ENCODE measurements at regions of chr1 and their contacts with region 1.

Region 1: DNA sequence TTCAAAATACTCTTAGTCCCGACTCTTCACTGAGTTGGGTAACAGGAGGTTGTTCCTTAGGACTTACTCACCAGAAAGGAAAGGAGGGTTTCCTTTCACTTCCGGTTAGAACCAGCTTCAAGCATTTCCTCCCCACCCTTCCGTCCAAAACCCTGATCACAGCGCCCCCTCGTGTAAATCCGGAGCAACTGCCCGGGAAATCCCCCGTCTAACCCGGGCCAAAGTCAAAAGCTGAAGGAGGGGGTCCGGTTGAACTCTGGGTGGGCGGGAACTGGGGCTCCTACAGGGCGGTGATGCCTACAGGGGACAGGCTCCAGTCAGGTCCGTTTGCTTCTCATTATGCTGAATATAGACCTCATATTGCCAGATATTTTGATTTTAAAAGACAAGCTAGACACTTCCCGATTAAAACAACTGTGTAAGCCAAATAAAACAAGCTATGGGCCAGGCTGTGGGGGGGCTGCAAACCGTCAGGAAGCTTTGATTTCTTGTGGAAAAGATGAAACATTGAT is 15.0 kb upstream of the MTARC2 start:
- DNase-seq: peak; percentile 42 to 83 (median 69)
- ATAC-seq: peak; percentile 84
- H3K4me3 ChIP-seq: peak overlapping the region; percentile 11 to 17
- H3K4me3 Mint-ChIP-seq: peak overlapping the region; percentile 42
- H3K27ac ChIP-seq: peak overlapping the region in 1 of 2 experiments; percentile 1
- H3K27ac Mint-ChIP-seq: no peak overlapping the region
- H3K4me1 ChIP-seq: peaks cover 11% of the 10 kb centered on the region
- H3K4me1 Mint-ChIP-seq: peaks cover 16% of the 10 kb centered on the region
- H3K27me3 ChIP-seq: no peaks in the 10 kb centered on the region
- H3K27me3 Mint-ChIP-seq: no peaks in the 10 kb centered on the region
- CTCF ChIP-seq: peak; percentile 79

Region 2: GRCh38 chr1:220189750-220190347 is 543.3 kb before region 1 on chr1:
- CTCF ChIA-PET with region 1: no interaction called
- POLR2A ChIA-PET with region 1: no interaction called
- intact Hi-C with region 1: loop called (anchors 10 kb)
- DNase-seq: peak in 2 of 9 experiments; percentile 7 to 38
- ATAC-seq: no peak
- H3K4me3 ChIP-seq: no peak overlapping the region
- H3K4me3 Mint-ChIP-seq: no peak overlapping the region
- H3K27ac ChIP-seq: no peak overlapping the region
- H3K27ac Mint-ChIP-seq: no peak overlapping the region
- H3K4me1 ChIP-seq: no peaks in the 10 kb centered on the region
- H3K4me1 Mint-ChIP-seq: no peaks in the 10 kb centered on the region
- H3K27me3 ChIP-seq: no peaks in the 10 kb centered on the region
- H3K27me3 Mint-ChIP-seq: no peaks in the 10 kb centered on the region
- CTCF ChIP-seq: peak; percentile 46

Region 3: DNA sequence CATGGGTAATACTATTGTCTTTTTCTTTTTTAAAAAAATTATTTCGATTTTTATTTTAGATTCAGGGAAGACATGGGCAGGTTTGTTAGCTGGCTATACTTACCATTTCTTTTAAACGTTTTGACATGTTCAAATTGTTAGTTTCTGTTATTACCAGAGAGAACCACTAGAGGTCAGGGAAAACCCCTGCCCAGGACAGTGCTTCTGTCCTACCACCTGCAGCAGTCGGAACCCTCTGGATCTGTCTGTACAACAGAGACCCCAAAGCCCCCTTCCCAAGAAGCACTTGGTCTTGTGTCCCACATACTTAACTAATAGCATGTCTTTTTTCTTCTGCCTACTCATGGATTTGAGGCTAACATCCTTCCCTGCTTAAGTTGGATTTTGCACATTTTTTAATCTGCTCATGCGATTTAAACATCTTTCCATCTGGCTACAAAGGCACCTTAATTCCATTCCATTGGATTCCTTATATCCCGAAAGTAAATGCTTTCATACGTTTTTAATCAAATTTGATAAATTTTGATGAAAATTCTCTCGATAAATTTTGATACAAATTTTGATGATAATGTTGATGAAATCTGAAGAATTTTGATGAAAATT is 53.0 kb before region 1 on chr1:
- CTCF ChIA-PET with region 1: interaction called, 3 read pairs
- POLR2A ChIA-PET with region 1: no interaction called
- intact Hi-C with region 1: loop called in 1 of 2 experiments (anchors 1 kb)
- DNase-seq: peak in 2 of 9 experiments; percentile 35 to 47
- ATAC-seq: no peak
- H3K4me3 ChIP-seq: no peak overlapping the region
- H3K4me3 Mint-ChIP-seq: no peak overlapping the region
- H3K27ac ChIP-seq: no peak overlapping the region
- H3K27ac Mint-ChIP-seq: no peak overlapping the region
- H3K4me1 ChIP-seq: no peaks in the 10 kb centered on the region
- H3K4me1 Mint-ChIP-seq: no peaks in the 10 kb centered on the region
- H3K27me3 ChIP-seq: no peaks in the 10 kb centered on the region
- H3K27me3 Mint-ChIP-seq: no peaks in the 10 kb centered on the region
- CTCF ChIP-seq: peak; percentile 47

Region 4: DNA sequence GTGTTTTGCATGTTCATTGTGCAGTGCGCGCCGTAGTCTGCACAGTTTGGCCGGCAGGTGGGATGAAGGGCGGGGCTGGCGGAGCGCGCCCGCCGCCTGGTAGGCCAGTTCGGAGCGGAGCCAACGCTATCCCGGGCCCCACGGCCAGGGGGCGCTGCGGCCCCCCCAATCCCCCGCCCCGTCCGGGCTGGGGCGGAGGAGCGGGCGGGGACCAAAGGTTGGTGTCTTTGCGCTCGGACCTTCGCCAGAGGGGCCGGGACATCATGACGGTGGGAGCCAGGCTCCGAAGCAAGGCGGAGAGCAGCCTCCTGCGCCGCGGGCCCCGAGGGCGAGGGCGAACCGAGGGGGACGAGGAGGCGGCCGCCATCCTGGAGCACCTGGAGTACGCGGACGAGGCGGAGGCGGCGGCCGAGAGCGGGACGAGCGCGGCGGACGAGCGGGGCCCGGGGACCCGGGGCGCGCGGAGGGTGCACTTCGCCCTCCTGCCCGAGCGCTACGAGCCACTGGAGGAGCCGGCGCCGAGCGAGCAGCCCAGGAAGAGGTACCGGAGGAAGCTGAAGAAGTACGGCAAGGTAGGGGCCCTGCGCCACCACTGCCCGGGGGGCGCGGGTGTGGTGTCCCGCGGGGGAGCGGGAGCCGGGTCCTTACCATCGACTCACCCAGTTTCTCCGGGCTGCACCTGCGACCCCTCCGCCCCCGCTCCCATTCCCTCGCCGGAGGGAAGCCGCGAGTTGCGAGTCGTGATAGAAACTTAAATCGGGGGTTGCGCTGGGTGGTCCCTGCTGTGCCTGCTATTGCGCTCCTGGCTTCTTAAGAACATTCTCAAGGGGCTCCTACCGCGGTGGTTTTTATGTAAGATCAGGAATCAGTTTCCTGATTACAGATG is 42.8 kb before region 1 on chr1 and contains the start of gene C1orf115:
- CTCF ChIA-PET with region 1: interaction called, 5 read pairs
- POLR2A ChIA-PET with region 1: no interaction called
- intact Hi-C with region 1: loop called in 1 of 2 experiments (anchors 1 kb)
- DNase-seq: peak; percentile 30 to 73 (median 64)
- ATAC-seq: peak; percentile 95
- H3K4me3 ChIP-seq: peak within 1 kb of the TSS; percentile 31 to 54
- H3K4me3 Mint-ChIP-seq: peak within 1 kb of the TSS; percentile 74
- H3K27ac ChIP-seq: no peak within 1 kb of the TSS
- H3K27ac Mint-ChIP-seq: no peak within 1 kb of the TSS
- H3K4me1 ChIP-seq: no peaks in the 10 kb centered on the region
- H3K4me1 Mint-ChIP-seq: peaks cover 5% of the 10 kb centered on the region
- H3K27me3 ChIP-seq: peaks cover 0 to 8% of the 10 kb centered on the region in 2 experiments
- H3K27me3 Mint-ChIP-seq: peaks cover 33% of the 10 kb centered on the region
- CTCF ChIP-seq: peak; percentile 64
- total RNA-seq, gene C1orf115: 0.16 to 0.28 TPM

Measured in CD8-positive, alpha-beta T cell (primary cell).